Dendritic cell treated with granulocyte-macrophage colony-stimulating factor and Interleukin-4, amounts not matched to agents 40 ng/mL and 50 ng/mL, for 4 days (primary cell): ENCODE measurements at regions of chr2 and their contacts with region 1.

Region 1: GRCh38 chr2:126776692-126777619 is 121.0 kb downstream of the GYPC start:
- H3K4me3 Mint-ChIP-seq: peak overlapping the region; percentile 83
- H3K27ac Mint-ChIP-seq: peak overlapping the region; percentile 60
- H3K4me1 Mint-ChIP-seq: peaks cover 35% of the 10 kb centered on the region
- H3K27me3 Mint-ChIP-seq: peaks cover 15% of the 10 kb centered on the region

Region 2: GRCh38 chr2:124804014-124804940 is 1972.7 kb before region 1 on chr2:
- intact Hi-C with region 1: loop called (anchors 10 kb)
- H3K4me3 Mint-ChIP-seq: no peak overlapping the region
- H3K27ac Mint-ChIP-seq: no peak overlapping the region
- H3K4me1 Mint-ChIP-seq: no peaks in the 10 kb centered on the region
- H3K27me3 Mint-ChIP-seq: no peaks in the 10 kb centered on the region

Region 3: GRCh38 chr2:126244937-126245336 is 532.0 kb before region 1 on chr2:
- intact Hi-C with region 1: loop called (anchors 2 kb)
- H3K4me3 Mint-ChIP-seq: no peak overlapping the region
- H3K27ac Mint-ChIP-seq: no peak overlapping the region
- H3K4me1 Mint-ChIP-seq: no peaks in the 10 kb centered on the region
- H3K27me3 Mint-ChIP-seq: peaks cover 1% of the 10 kb centered on the region

Region 4: GRCh38 chr2:126359494-126359893 is 417.5 kb before region 1 on chr2:
- intact Hi-C with region 1: loop called (anchors 2 kb)
- H3K4me3 Mint-ChIP-seq: no peak overlapping the region
- H3K27ac Mint-ChIP-seq: no peak overlapping the region
- H3K4me1 Mint-ChIP-seq: no peaks in the 10 kb centered on the region
- H3K27me3 Mint-ChIP-seq: no peaks in the 10 kb centered on the region

Region 5: GRCh38 chr2:126657636-126658318 is 119.2 kb before region 1 on chr2:
- intact Hi-C with region 1: loop called (anchors 5 kb)
- H3K4me3 Mint-ChIP-seq: peak overlapping the region; percentile 6
- H3K27ac Mint-ChIP-seq: peak overlapping the region; percentile 73
- H3K4me1 Mint-ChIP-seq: peaks cover 82% of the 10 kb centered on the region
- H3K27me3 Mint-ChIP-seq: peaks cover 5% of the 10 kb centered on the region

Region 6: DNA sequence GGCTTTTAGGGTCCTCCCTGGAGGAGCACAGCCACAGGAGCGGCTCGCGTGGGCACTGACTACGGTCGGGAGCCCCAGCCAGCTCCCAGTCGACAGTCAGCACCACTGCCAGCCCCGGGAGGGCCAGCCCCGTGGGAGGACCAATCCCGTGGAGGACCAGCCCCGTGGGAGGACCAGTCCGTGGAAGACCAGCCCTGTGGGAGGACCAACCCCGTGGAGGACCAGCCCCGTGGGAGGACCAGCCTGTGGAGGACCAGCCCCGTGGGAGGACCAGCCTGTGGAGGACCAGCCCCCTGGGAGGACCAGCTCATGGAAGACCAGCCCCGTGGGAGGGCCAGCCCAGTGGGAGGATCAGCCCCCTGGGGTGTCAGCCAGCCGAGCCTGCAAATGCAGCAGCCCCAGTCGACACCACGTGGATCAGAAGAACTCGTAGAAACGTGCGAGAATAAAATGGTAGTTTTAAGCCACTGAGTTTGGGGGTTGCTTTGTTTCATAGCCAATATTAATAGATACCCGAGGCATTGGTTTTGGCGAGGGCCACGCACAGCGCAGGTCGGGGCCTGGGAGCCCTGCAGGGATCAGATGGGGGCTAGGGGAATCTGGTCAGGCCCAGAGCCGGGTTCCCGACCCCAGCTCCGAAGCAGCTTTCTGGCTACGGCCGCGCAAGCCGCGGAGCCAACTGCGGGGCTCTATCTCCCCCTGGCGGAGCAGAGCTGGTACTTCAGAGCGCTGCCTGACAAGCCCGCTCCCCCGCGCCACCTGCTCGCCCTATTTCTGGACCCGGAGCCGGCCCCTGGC is 194.7 kb after region 1 on chr2:
- intact Hi-C with region 1: loop called (anchors 5 kb)
- H3K4me3 Mint-ChIP-seq: peak overlapping the region; percentile 75
- H3K27ac Mint-ChIP-seq: peak overlapping the region; percentile 50
- H3K4me1 Mint-ChIP-seq: peaks cover 8% of the 10 kb centered on the region
- H3K27me3 Mint-ChIP-seq: peaks cover 23% of the 10 kb centered on the region